Transverse colon (tissue), 4 donors: ENCODE measurements at regions of chr4 and their contacts with region 1.

Region 1: DNA sequence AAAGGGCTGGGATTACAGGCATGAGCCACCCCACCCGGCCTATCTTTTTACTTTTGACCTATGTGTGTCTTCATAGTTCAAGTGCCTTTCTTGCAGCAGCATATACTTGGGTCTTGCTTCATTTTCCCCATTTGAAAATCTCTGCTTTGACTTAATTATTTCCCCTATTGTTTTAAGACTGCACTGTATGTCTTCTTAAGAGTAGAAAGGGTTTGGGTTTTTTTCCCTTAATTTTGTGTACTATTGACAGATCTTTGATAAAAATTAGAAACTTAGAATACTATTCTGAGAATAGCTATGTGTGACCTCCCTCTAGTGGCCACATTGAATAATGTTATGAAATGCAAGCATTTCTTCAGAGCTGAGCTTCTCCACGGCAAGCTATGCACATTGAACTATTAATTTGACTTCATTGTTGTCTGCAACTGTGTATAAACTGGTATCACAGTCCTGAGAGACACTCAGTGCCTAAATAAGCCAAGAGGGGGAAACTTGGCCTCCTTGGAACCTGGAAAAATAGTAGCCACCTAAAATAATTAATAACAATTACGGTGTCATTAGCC is 8.7 kb upstream of the SLC25A4 start:
- DNase-seq: no peak
- H3K4me3 ChIP-seq: no peak overlapping the region
- H3K27ac ChIP-seq: no peak overlapping the region
- H3K4me1 ChIP-seq: no peaks in the 10 kb centered on the region
- H3K27me3 ChIP-seq: peaks cover 14% of the 10 kb centered on the region
- CTCF ChIP-seq: peak; percentile 70 to 84 (median 79)
- EP300 ChIP-seq: no peak
- POLR2A ChIP-seq: no peak

Region 2: DNA sequence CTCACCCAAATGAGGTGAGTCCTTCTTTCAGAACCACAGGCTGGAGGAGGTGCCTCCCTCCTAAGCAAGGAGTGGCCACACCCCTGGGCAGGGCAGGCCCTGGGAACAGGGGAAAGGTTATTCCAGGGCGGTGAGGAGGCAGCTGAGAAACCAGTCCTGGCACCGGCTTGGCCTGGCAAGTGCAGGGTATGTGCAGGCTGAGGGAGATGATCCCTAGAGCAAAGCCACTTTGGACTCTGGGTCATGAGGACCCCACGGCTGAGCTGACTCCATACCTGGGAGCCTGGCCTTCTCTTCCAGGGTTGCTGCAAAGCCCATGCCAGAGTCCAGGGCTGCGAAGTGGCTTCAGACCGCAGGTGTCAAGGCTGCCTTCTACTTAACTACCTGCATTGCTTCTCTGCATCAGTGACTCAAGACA is 165.6 kb before region 1 on chr4:
- in situ Hi-C with region 1: no loop called
- intact Hi-C with region 1: no loop called
- DNase-seq: peak; percentile 89
- H3K4me3 ChIP-seq: no peak overlapping the region
- H3K27ac ChIP-seq: peak overlapping the region in 3 of 4 donors; percentile 37 to 53 (median 46)
- H3K4me1 ChIP-seq: peaks cover 4 to 14% (median 6%) of the 10 kb centered on the region in 4 donors
- H3K27me3 ChIP-seq: no peaks in the 10 kb centered on the region
- CTCF ChIP-seq: no peak
- EP300 ChIP-seq: no peak
- POLR2A ChIP-seq: no peak

Region 3: GRCh38 chr4:185011408-185011807 is 123.0 kb before region 1 on chr4:
- in situ Hi-C with region 1: no loop called
- intact Hi-C with region 1: no loop called
- DNase-seq: no peak
- H3K4me3 ChIP-seq: no peak overlapping the region
- H3K27ac ChIP-seq: no peak overlapping the region
- H3K4me1 ChIP-seq: no peaks in the 10 kb centered on the region
- H3K27me3 ChIP-seq: peaks cover 86% of the 10 kb centered on the region
- CTCF ChIP-seq: peak in 4 of 5 experiments; percentile 22 to 29 (median 27)
- EP300 ChIP-seq: no peak
- POLR2A ChIP-seq: no peak

Region 4: GRCh38 chr4:185039508-185040273 is 94.7 kb before region 1 on chr4:
- in situ Hi-C with region 1: loop called in 3 of 4 experiments (anchors 5 to 10 kb)
- intact Hi-C with region 1: loop called (anchors 5 kb)
- DNase-seq: peak; percentile 33
- H3K4me3 ChIP-seq: no peak overlapping the region
- H3K27ac ChIP-seq: no peak overlapping the region
- H3K4me1 ChIP-seq: peaks cover 0 to 7% (median 1%) of the 10 kb centered on the region in 4 donors
- H3K27me3 ChIP-seq: no peaks in the 10 kb centered on the region
- CTCF ChIP-seq: peak; percentile 73 to 82 (median 78)
- EP300 ChIP-seq: no peak
- POLR2A ChIP-seq: no peak

Region 5: GRCh38 chr4:185165605-185166063 is 31.2 kb after region 1 on chr4:
- in situ Hi-C with region 1: no loop called
- intact Hi-C with region 1: no loop called
- DNase-seq: no peak
- H3K4me3 ChIP-seq: no peak overlapping the region
- H3K27ac ChIP-seq: no peak overlapping the region
- H3K4me1 ChIP-seq: no peaks in the 10 kb centered on the region
- H3K27me3 ChIP-seq: no peaks in the 10 kb centered on the region
- CTCF ChIP-seq: no peak
- EP300 ChIP-seq: no peak
- POLR2A ChIP-seq: no peak

Region 6: GRCh38 chr4:185566972-185567371 is 432.6 kb after region 1 on chr4:
- in situ Hi-C with region 1: no loop called
- intact Hi-C with region 1: no loop called
- DNase-seq: no peak
- H3K4me3 ChIP-seq: no peak overlapping the region
- H3K27ac ChIP-seq: peak overlapping the region; percentile 75 to 86 (median 80)
- H3K4me1 ChIP-seq: peaks cover 0 to 21% (median 14%) of the 10 kb centered on the region in 4 donors
- H3K27me3 ChIP-seq: no peaks in the 10 kb centered on the region
- CTCF ChIP-seq: no peak
- EP300 ChIP-seq: no peak
- POLR2A ChIP-seq: no peak